Activated CD4-positive, alpha-beta T cell treated with anti-CD3 and anti-CD28 coated beads for 36 hours (primary cell): ENCODE measurements at regions of chr1 and their contacts with region 1.

Region 1: DNA sequence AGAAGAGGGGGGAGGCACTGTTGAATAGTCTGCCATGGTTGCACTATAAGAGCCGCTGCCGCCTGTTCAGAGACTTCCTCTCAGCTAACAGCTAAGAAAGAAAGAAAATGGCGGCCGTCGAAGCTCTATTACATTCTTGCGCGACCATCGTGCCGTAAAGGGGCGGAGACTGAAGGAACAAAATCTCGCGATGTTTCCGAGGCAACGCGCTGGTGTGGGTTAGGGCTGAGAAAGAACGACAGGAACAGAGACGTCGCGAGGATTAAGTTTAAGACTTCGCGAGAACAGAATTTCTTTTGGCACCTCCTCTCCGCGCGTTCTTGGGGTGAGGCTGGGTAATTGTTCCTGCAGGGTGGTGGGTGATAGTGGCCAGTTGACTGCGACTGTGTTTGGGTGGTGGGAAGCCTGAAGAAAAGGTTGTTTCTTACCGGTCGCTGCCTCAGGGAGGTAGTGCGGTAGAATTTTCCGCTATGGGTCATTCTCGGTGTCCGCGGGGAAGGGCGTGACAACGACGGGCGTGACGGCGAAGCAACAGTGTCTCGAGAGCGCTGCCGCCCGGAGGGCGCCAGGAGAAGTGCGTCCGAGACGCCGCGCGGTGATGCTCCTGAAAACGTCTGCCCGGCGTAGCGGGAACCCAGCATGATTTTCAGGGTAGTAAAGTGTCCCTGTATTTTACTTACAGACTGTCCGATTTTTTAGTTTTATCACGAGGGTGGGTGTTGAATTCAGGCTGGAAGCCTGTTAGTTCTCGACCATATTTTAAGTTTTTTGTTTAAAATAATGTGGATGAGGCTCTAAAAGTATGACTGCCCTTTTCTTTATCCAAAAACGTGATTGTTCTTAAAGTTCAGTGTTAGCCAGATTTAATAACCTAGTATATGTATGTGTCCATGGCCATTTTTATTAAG is at the start of gene FUBP1:
- DNase-seq: peak; percentile 97
- ATAC-seq: peak; percentile 81
- H3K4me3 Mint-ChIP-seq: no peak within 1 kb of the TSS
- H3K27ac Mint-ChIP-seq: no peak within 1 kb of the TSS
- H3K4me1 Mint-ChIP-seq: peaks cover 47% of the 10 kb centered on the region
- H3K27me3 Mint-ChIP-seq: no peaks in the 10 kb centered on the region
- total RNA-seq, gene FUBP1: 240 to 258 TPM

Region 2: DNA sequence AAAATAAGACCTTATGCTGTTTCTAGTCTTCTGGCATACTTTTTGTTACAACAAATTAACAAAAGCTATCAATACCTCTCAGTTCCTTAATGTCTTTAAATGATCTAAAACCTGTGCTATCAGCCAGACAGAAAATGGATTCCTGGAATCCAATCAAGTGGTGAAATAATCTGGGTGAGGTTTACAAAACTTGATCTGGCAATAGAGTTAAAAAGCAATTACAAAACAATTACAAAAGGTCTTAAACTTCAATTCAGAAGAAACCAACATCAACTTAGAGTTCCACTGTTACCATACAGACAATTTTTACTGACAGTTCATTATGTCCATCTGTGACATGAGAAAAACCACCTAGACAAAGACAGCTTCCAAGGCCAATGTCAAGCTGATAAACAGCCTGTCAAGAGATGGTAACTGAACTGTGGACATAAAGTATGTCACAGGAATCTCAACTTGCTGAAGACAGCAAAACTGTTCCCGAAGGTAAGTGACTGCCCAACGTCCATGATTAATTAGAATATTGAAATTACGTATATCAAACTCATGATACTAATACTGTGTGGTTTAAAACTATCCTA is 314.2 kb before region 1 on chr1:
- CTCF ChIA-PET with region 1: no interaction called
- POLR2A ChIA-PET with region 1: no interaction called
- intact Hi-C with region 1: loop called in 1 of 2 experiments (anchors 5 kb)
- DNase-seq: no peak
- ATAC-seq: no peak
- H3K4me3 Mint-ChIP-seq: no peak overlapping the region
- H3K27ac Mint-ChIP-seq: peak overlapping the region; percentile 60
- H3K4me1 Mint-ChIP-seq: peaks cover 54% of the 10 kb centered on the region
- H3K27me3 Mint-ChIP-seq: no peaks in the 10 kb centered on the region

Region 3: GRCh38 chr1:77940921-77941570 is 38.2 kb before region 1 on chr1:
- CTCF ChIA-PET with region 1: no interaction called
- POLR2A ChIA-PET with region 1: interaction called, 16 read pairs
- intact Hi-C with region 1: no loop called
- DNase-seq: no peak
- ATAC-seq: no peak
- H3K4me3 Mint-ChIP-seq: no peak overlapping the region
- H3K27ac Mint-ChIP-seq: no peak overlapping the region
- H3K4me1 Mint-ChIP-seq: peaks cover 19% of the 10 kb centered on the region
- H3K27me3 Mint-ChIP-seq: no peaks in the 10 kb centered on the region

Region 4: DNA sequence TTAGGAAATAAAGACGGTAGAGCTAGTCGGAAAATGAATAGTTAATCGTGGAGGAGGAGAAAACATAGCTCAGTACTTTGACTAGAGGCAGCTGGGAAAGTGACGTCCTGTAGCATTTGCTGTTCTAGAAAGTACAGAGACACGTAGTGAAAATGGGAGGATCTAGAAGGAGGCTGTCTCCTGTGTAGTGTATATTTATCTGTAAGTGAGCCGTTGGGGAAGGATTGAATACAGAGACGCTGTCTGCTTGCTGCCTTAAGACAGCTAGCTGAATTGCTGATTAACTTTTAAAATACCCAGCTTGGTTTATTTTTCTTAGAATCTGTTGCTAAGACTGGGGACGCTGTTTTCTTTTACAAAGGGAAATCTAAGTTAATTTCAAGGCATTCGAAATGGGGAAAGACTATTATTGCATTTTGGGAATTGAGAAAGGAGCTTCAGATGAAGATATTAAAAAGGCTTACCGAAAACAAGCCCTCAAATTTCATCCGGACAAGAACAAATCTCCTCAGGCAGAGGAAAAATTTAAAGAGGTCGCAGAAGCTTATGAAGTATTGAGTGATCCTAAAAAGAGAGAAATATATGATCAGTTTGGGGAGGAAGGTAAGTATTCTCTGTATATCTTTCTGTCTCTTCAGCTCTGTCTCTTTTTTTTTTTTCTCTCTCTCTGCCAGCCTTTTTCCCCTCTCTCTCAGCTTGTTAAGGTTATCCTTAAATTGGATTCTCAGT is 25.7 kb after region 1 on chr1 and contains the start of gene DNAJB4:
- CTCF ChIA-PET with region 1: interaction called, 55 read pairs
- POLR2A ChIA-PET with region 1: interaction called, 297 read pairs
- intact Hi-C with region 1: loop called (anchors 1 kb)
- DNase-seq: peak; percentile 75
- ATAC-seq: peak; percentile 99
- H3K4me3 Mint-ChIP-seq: peak within 1 kb of the TSS; percentile 91
- H3K27ac Mint-ChIP-seq: peak within 1 kb of the TSS; percentile 99
- H3K4me1 Mint-ChIP-seq: peaks cover 41% of the 10 kb centered on the region
- H3K27me3 Mint-ChIP-seq: no peaks in the 10 kb centered on the region
- total RNA-seq, gene DNAJB4: 8.8 to 9.8 TPM

Region 5: DNA sequence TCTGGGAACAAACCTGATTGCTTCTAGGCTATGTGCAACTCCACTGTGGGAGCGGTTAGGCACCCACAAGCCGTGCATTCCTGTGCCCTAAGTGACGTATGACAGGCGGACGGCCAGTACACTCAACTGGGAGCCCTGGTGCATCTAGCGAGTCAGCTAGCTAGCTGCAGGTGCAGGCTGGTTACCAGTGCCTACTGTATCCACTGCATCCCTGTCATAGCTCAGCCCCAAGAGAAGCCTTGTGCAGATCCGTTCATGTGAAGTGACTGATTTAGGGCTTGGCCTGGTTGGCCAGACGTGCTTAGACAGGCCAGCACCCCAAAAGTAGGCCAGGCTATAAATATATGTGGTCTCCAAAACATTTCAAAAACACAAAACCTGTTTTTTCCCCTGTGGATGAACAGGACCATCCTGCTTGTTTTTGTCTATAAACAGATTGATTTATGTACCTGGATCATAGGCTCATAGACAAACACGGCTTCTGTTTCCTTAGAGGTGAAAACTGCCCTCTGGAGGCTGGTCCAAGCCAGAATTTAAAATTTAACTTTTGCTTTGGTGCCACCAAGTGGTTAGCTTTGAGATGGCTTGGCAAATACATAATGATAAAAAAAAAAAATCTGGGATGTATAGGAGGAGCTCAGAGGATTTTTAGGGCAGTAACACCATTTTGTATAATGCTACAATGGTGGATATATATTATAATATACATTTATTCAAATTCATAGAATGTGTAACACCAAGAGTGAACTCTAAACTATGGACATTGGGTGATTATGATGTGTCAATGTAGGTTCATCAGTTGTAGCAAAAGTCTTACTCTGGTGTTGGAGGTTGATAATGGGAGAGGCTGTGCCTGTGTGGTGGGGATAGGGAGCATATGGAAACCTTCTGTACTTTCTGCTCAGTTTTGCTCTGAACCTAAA is 135.1 kb after region 1 on chr1:
- CTCF ChIA-PET with region 1: interaction called, 8 read pairs
- POLR2A ChIA-PET with region 1: interaction called, 6 read pairs
- intact Hi-C with region 1: loop called (anchors 2 kb)
- DNase-seq: peak; percentile 72
- ATAC-seq: peak; percentile 93
- H3K4me3 Mint-ChIP-seq: no peak overlapping the region
- H3K27ac Mint-ChIP-seq: no peak overlapping the region
- H3K4me1 Mint-ChIP-seq: peaks cover 5% of the 10 kb centered on the region
- H3K27me3 Mint-ChIP-seq: no peaks in the 10 kb centered on the region